Mammary epithelial cell (primary cell): ENCODE measurements at regions of chr10 and their contacts with region 1.

Region 1: GRCh38 chr10:4241724-4242345 is 456.8 kb upstream of the KLF6 start:
- DNase-seq: peak; percentile 94
- H3K4me3 ChIP-seq: peak overlapping the region; percentile 27 to 51 (median 46)
- H3K27ac ChIP-seq: peak overlapping the region; percentile 97
- H3K4me1 ChIP-seq: peaks cover 47% of the 10 kb centered on the region
- H3K27me3 ChIP-seq: no peaks in the 10 kb centered on the region
- CTCF ChIP-seq: no peak

Region 2: GRCh38 chr10:3852147-3852904 is 389.5 kb before region 1 on chr10:
- CTCF ChIA-PET with region 1: no interaction called
- dilution Hi-C with region 1: no loop called
- in situ Hi-C with region 1: no loop called
- intact Hi-C with region 1: loop called (anchors 5 kb)
- DNase-seq: peak; percentile 100
- H3K4me3 ChIP-seq: no peak overlapping the region
- H3K27ac ChIP-seq: peak overlapping the region; percentile 99
- H3K4me1 ChIP-seq: peaks cover 39% of the 10 kb centered on the region
- H3K27me3 ChIP-seq: no peaks in the 10 kb centered on the region
- CTCF ChIP-seq: no peak

Region 3: GRCh38 chr10:4195213-4195612 is 46.6 kb before region 1 on chr10:
- CTCF ChIA-PET with region 1: no interaction called
- dilution Hi-C with region 1: no loop called
- in situ Hi-C with region 1: no loop called
- intact Hi-C with region 1: loop called (anchors 2 kb)
- DNase-seq: peak; percentile 70
- H3K4me3 ChIP-seq: no peak overlapping the region
- H3K27ac ChIP-seq: no peak overlapping the region
- H3K4me1 ChIP-seq: peaks cover 8% of the 10 kb centered on the region
- H3K27me3 ChIP-seq: no peaks in the 10 kb centered on the region
- CTCF ChIP-seq: no peak

Region 4: DNA sequence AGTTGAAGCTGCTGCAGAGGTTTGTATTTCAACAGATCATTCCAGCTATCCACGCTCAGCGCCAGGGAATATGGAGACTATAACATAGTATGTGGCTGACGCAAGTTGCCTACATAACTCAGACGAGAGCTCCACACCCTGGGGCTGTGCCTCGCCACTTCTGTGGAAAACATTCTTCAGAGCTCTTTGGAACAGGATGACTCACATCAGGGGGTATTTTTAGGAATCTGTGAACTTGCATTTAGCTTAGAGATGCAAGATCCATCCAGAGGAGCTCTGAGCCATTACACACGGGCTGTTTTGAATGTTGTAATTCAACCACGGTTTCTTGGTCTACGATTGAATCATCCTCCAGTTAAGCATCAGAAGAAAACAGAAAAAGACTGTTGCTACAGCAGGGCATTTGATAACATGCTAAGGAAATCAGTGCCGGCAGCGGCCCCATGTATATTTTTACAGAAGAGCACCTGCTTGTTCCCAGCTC is 102.7 kb after region 1 on chr10:
- CTCF ChIA-PET with region 1: interaction called, 3 read pairs
- dilution Hi-C with region 1: loop called (anchors 5 kb)
- in situ Hi-C with region 1: no loop called
- intact Hi-C with region 1: loop called (anchors 2 kb)
- DNase-seq: peak; percentile 99
- H3K4me3 ChIP-seq: no peak overlapping the region
- H3K27ac ChIP-seq: peak overlapping the region; percentile 90
- H3K4me1 ChIP-seq: peaks cover 16% of the 10 kb centered on the region
- H3K27me3 ChIP-seq: no peaks in the 10 kb centered on the region
- CTCF ChIP-seq: no peak

Region 5: GRCh38 chr10:5412277-5412941 is 1170.6 kb after region 1 on chr10 and contains the start of gene NET1:
- CTCF ChIA-PET with region 1: no interaction called
- dilution Hi-C with region 1: no loop called
- in situ Hi-C with region 1: no loop called
- intact Hi-C with region 1: no loop called
- DNase-seq: peak; percentile 87
- H3K4me3 ChIP-seq: peak within 1 kb of the TSS; percentile 71 to 92 (median 83)
- H3K27ac ChIP-seq: peak within 1 kb of the TSS; percentile 93
- H3K4me1 ChIP-seq: peaks cover 6% of the 10 kb centered on the region
- H3K27me3 ChIP-seq: no peaks in the 10 kb centered on the region
- CTCF ChIP-seq: no peak
- total RNA-seq, gene NET1: 8.3 to 15.1 TPM